ENCODE measurements at regions of chr10 and their contacts with region 1.

Region 1: GRCh38 chr10:95688648-95689047 is 5.1 kb downstream of the TCTN3 start:
- DNase-seq: no peak
- H3K4me3 ChIP-seq: no peak overlapping the region
- H3K27ac ChIP-seq: no peak overlapping the region
- H3K4me1 ChIP-seq: no peaks in the 10 kb centered on the region
- H3K27me3 ChIP-seq: no peaks in the 10 kb centered on the region
- CTCF ChIP-seq: no peak
- EP300 ChIP-seq: no peak
- POLR2A ChIP-seq: no peak

Region 2: GRCh38 chr10:95618126-95618525 is 70.5 kb before region 1 on chr10:
- intact Hi-C with region 1: loop called in 1 of 4 experiments (anchors 10 kb)
- DNase-seq: no peak
- H3K4me3 ChIP-seq: no peak overlapping the region
- H3K27ac ChIP-seq: no peak overlapping the region
- H3K4me1 ChIP-seq: no peaks in the 10 kb centered on the region
- H3K27me3 ChIP-seq: no peaks in the 10 kb centered on the region
- CTCF ChIP-seq: no peak
- EP300 ChIP-seq: no peak
- POLR2A ChIP-seq: no peak

Region 3: DNA sequence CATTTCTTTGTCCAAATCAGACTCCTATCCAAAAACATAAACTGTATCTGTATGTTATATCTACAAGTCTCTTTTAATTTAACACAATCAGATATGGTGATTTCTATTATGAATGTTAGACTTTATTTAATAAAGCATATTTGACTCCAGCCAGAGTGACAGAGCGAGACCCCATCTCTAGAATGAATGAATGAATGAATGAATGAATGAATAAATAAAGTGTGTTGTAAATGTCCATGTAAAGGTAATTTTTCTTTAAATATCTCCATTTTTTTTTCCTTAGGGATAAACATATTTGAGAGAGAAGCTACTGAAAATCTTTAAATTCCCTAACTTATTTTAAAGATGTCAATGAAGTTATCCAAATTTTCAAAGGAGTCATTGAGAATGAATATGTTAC is 14.0 kb before region 1 on chr10:
- intact Hi-C with region 1: no loop called
- DNase-seq: no peak
- H3K4me3 ChIP-seq: no peak overlapping the region
- H3K27ac ChIP-seq: no peak overlapping the region
- H3K4me1 ChIP-seq: no peaks in the 10 kb centered on the region
- H3K27me3 ChIP-seq: no peaks in the 10 kb centered on the region
- CTCF ChIP-seq: no peak
- EP300 ChIP-seq: no peak
- POLR2A ChIP-seq: no peak

Region 4: DNA sequence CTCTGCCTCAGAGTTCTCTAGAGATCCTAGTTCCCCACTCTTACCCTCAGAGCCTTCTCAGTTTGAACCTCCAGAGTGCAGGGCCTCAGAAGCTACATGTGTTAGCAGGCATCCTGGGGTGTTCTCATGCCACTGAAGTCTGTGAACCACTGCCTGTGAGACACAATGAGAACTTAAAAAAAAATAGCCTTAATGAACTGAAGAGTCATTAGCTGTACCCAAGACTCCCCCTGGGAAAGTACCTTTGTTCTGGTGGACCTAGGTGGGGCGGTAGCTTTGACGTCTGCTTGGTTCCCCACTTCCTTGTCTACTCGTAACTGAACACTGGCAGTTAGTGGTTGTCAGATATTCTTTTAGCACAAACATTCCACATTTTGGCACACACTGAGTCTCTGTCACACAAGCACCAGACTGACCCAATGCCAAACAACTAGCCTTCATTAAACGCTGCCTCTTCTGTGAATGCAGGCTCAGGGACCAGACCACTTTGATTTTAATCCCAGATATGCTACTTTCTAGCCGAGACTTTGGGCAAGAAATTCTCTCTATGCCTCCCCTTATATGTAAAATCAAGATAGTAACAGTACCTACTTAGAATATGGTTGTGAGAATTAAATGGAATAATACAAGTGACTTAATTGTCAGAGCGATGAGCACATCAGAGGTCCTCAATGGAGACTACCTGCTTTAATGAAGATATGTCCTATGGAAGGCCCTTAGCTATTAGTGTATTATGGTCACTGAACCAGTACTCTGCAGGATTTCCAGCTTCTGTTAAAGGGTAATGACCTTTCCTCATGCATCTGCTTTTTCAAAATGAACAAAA is 143.8 kb after region 1 on chr10:
- intact Hi-C with region 1: no loop called
- DNase-seq: no peak
- H3K4me3 ChIP-seq: no peak overlapping the region
- H3K27ac ChIP-seq: no peak overlapping the region
- H3K4me1 ChIP-seq: no peaks in the 10 kb centered on the region
- H3K27me3 ChIP-seq: no peaks in the 10 kb centered on the region
- CTCF ChIP-seq: no peak
- EP300 ChIP-seq: no peak
- POLR2A ChIP-seq: no peak

Measured in ovary (tissue), 10 donors.